Left ventricle myocardium inferior (tissue), 1 donor: ENCODE measurements at regions of chr1 and their contacts with region 1.

Region 1: GRCh38 chr1:181676269-181676668 is 193.0 kb downstream of the CACNA1E start:
- DNase-seq: no peak
- H3K4me3 ChIP-seq: no peak overlapping the region
- H3K27ac ChIP-seq: no peak overlapping the region
- H3K4me1 ChIP-seq: no peaks in the 10 kb centered on the region
- H3K27me3 ChIP-seq: peaks cover 88% of the 10 kb centered on the region
- CTCF ChIP-seq: peak; percentile 53

Region 2: GRCh38 chr1:181482521-181483284 is 193.6 kb before region 1 on chr1:
- intact Hi-C with region 1: loop called (anchors 5 kb)
- DNase-seq: no peak
- H3K4me3 ChIP-seq: peak overlapping the region; percentile 35
- H3K27ac ChIP-seq: no peak overlapping the region
- H3K4me1 ChIP-seq: peaks cover 25% of the 10 kb centered on the region
- H3K27me3 ChIP-seq: peaks cover 94% of the 10 kb centered on the region
- CTCF ChIP-seq: no peak

Region 3: GRCh38 chr1:181712711-181713110 is 36.4 kb after region 1 on chr1:
- intact Hi-C with region 1: no loop called
- DNase-seq: no peak
- H3K4me3 ChIP-seq: no peak overlapping the region
- H3K27ac ChIP-seq: no peak overlapping the region
- H3K4me1 ChIP-seq: no peaks in the 10 kb centered on the region
- H3K27me3 ChIP-seq: peaks cover 66% of the 10 kb centered on the region
- CTCF ChIP-seq: no peak